PC-9 (cell line): ENCODE measurements at regions of chr1 and their contacts with region 1.

Region 1: GRCh38 chr1:67685067-67685557 is at the start of gene GADD45A:
- DNase-seq: peak; percentile 99
- H3K4me3 ChIP-seq: peak within 1 kb of the TSS; percentile 90
- H3K27ac ChIP-seq: peak within 1 kb of the TSS; percentile 99
- H3K4me1 ChIP-seq: peaks cover 57% of the 10 kb centered on the region
- H3K27me3 ChIP-seq: no peaks in the 10 kb centered on the region
- CTCF ChIP-seq: no peak
- total RNA-seq, gene GADD45A: 63.6 and 112 TPM in 2 replicates

Region 2: DNA sequence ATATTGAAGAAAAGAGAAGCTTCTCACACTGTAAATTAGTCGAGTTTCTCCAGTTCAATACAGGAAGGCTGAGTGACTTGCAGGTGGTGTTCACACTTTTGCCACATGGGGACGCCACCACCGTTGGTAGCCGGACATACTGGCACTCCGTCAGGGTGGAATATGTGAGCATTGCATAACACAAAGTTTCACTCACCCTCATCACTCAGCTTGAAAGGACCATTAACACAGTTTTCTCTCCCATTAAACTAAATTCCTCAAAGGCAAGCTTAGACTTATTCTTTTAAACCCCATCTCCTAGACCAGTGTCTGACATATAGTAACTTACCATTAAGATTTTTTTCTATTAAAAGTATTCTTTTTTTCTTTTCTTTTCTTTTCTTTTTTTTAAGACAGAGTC is 149.6 kb before region 1 on chr1:
- CTCF ChIA-PET with region 1: interaction called, 4 read pairs
- POLR2A ChIA-PET with region 1: interaction called, 29 read pairs
- intact Hi-C with region 1: loop called (anchors 1 kb)
- DNase-seq: peak; percentile 69 to 88
- H3K4me3 ChIP-seq: no peak overlapping the region
- H3K27ac ChIP-seq: no peak overlapping the region
- H3K4me1 ChIP-seq: peaks cover 12% of the 10 kb centered on the region; the same call in 1 of the 2 replicates
- H3K27me3 ChIP-seq: no peaks in the 10 kb centered on the region
- CTCF ChIP-seq: peak; percentile 97

Region 3: GRCh38 chr1:67580646-67581403 is 104.3 kb before region 1 on chr1:
- CTCF ChIA-PET with region 1: no interaction called
- POLR2A ChIA-PET with region 1: interaction called, 18 read pairs
- intact Hi-C with region 1: no loop called
- DNase-seq: peak in 1 of 2 experiments; percentile 94
- H3K4me3 ChIP-seq: no peak overlapping the region
- H3K27ac ChIP-seq: peak overlapping the region; percentile 85
- H3K4me1 ChIP-seq: peaks cover 59% of the 10 kb centered on the region
- H3K27me3 ChIP-seq: no peaks in the 10 kb centered on the region
- CTCF ChIP-seq: no peak

Region 4: DNA sequence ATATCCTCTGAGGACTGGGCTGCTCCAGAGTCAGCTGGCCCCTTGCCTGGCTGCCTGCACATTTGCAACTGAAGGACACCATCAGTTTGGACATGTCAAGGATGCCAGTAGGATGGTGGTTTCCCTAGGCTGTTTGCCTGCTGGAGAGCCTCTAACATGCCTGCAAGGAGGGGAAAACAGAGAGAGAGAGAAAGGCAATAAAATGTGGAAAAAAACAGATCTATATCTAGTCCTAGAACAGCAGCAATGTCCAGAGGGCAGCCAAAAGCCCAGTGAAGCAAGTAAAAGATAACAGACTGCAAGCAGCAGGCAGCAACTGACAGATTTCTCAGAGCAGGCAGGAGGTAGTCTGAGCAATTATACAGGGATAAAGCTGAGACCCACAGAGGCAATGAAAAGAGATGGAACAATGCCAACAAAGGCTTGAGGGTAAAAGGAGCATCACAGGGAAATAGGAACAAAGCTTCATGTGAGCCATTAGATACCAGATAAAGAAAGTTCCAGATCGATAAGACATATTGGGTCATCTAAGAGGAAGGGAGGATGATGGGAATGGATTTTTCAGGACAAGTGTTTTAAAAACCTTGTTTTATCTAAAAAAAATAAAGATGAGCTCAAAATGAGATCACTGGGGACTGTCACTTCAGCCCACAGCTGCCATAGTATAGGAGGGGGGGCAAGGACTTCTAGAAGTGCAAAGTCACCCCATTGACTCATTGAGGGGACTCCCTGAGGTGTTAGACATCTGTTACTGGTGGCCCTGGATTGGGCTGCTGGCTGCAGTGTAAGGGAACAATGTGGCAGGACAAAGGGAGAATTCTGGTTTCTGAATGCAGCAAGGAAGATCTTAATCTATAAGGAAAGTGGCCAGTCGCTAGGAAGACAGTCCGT is 38.7 kb before region 1 on chr1:
- CTCF ChIA-PET with region 1: no interaction called
- POLR2A ChIA-PET with region 1: no interaction called
- intact Hi-C with region 1: loop called (anchors 2 kb)
- DNase-seq: peak; percentile 46 to 49
- H3K4me3 ChIP-seq: no peak overlapping the region
- H3K27ac ChIP-seq: no peak overlapping the region
- H3K4me1 ChIP-seq: peaks cover 19% of the 10 kb centered on the region
- H3K27me3 ChIP-seq: no peaks in the 10 kb centered on the region
- CTCF ChIP-seq: no peak

Region 5: DNA sequence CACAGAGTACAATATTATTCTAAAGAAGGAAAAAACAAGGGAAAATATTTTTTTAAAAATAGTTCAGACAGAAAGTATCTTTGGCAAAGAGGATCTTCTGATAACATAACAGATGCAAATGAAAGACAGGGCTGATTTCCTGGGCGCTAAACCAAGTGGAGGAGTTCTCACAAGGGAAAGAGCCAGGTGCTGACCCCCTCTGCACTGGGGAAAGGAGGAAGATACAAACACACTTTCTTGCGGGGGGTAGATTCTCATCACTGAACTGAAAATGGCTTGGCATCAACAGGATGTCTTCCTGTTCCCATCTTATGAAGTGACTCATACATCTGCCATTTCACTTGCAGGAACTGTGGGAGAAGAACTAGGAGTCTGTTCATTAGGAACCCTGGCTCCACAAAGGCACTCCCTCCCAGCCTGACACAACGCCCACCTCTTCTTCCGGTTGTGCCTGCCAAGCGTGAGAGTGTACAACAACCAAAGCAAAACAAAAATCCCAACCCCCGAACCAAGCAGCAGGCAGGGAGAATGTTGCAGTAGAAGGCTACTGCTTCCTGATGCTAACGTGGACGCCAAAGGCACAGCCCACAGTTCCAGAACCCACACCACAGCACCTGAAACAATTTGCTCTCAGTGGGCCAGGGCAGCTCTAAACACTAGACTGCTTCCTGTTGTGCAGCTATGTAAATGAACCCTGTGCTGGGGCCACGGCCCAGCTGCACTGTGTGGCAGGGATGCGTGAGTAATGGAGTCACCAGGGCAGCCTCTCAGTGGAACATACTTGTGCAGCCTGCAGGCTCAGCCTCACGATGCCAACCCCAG is 50.9 kb after region 1 on chr1:
- CTCF ChIA-PET with region 1: interaction called, 8 read pairs
- POLR2A ChIA-PET with region 1: interaction called, 16 read pairs
- intact Hi-C with region 1: no loop called
- DNase-seq: peak; percentile 71 to 78
- H3K4me3 ChIP-seq: no peak overlapping the region
- H3K27ac ChIP-seq: peak overlapping the region; percentile 22; the same call in 1 of the 2 replicates
- H3K4me1 ChIP-seq: peaks cover 9% of the 10 kb centered on the region
- H3K27me3 ChIP-seq: no peaks in the 10 kb centered on the region
- CTCF ChIP-seq: no peak

Region 6: GRCh38 chr1:67760030-67760821 is 75.1 kb after region 1 on chr1:
- CTCF ChIA-PET with region 1: interaction called, 9 read pairs
- POLR2A ChIA-PET with region 1: interaction called, 5 read pairs
- intact Hi-C with region 1: loop called (anchors 1 kb)
- DNase-seq: peak; percentile 63 to 71
- H3K4me3 ChIP-seq: no peak overlapping the region
- H3K27ac ChIP-seq: 0 out of 2 replicates have a peak overlapping the region, but pooled peaks have one; percentile 4
- H3K4me1 ChIP-seq: peaks cover 12% of the 10 kb centered on the region
- H3K27me3 ChIP-seq: no peaks in the 10 kb centered on the region
- CTCF ChIP-seq: peak; percentile 99

Region 7: DNA sequence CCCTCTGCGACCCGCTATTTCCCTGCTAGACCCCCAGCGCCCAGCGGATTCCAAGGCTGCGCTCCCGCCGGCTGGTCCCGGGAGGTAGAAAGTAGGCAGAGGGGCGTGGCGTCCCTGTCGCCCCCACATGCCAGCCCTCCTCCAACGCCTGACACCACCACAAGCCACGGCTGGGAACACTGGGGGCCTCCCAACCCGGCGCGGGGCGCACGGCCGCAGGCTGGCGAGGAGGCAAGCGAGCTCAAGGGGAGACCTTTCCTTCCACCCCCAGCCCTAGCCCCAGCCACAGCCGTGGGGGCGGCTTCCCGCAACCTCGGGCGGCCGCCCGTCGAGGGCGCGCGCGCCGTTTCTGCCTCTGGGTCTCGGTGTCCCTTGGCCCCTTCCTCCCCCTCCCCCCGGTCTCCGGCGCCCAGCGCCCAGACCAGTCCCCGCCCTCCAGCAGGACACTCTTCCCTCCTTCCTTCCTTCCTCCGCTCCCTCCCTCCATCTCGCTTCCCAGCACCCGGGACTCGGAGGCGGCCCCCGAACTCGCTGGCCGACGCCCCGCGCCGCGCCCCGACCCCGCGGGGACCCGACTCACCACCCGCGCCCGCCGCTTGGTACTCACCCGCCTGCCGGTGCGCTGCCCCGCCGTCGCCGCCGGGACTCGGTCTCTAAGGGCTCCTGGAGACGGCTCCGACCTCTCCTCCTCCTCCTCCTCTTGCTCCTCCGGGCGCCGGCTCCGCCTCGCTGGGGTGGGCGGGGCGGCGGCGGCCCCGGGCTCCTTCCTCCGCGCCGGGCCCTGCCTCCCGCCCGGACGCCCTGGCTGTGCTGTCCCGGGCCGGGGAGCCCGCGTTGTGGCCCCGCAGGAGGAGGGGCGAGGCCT is 147.9 kb after region 1 on chr1 and contains the start of gene GNG12:
- CTCF ChIA-PET with region 1: no interaction called
- POLR2A ChIA-PET with region 1: no interaction called
- intact Hi-C with region 1: loop called (anchors 1 kb)
- DNase-seq: peak; percentile 67 to 85
- H3K4me3 ChIP-seq: peak within 1 kb of the TSS; percentile 92
- H3K27ac ChIP-seq: peak within 1 kb of the TSS; percentile 82
- H3K4me1 ChIP-seq: peaks cover 20% of the 10 kb centered on the region
- H3K27me3 ChIP-seq: no peaks in the 10 kb centered on the region
- CTCF ChIP-seq: no peak
- total RNA-seq, gene GNG12: 69.9 and 102 TPM in 2 replicates

Region 8: GRCh38 chr1:68600049-68600661 is 915.0 kb after region 1 on chr1:
- CTCF ChIA-PET with region 1: no interaction called
- POLR2A ChIA-PET with region 1: no interaction called
- intact Hi-C with region 1: no loop called
- DNase-seq: peak in 1 of 2 experiments; percentile 8
- H3K4me3 ChIP-seq: peak overlapping the region; percentile 40
- H3K27ac ChIP-seq: no peak overlapping the region
- H3K4me1 ChIP-seq: no peaks in the 10 kb centered on the region
- H3K27me3 ChIP-seq: no peaks in the 10 kb centered on the region
- CTCF ChIP-seq: peak; percentile 92